ENCODE measurements at regions of chr5 and their contacts with region 1.

Region 1: GRCh38 chr5:989961-990530 is 18.6 kb upstream of the NKD2 start:
- DNase-seq: peak in 1 of 2 experiments; percentile 58
- H3K4me3 ChIP-seq: no peak overlapping the region
- H3K4me3 Mint-ChIP-seq: no peak overlapping the region
- H3K27ac Mint-ChIP-seq: no peak overlapping the region
- H3K4me1 ChIP-seq: peaks cover 7% of the 10 kb centered on the region; the same call in 1 of the 2 replicates
- H3K4me1 Mint-ChIP-seq: peaks cover 8% of the 10 kb centered on the region
- H3K27me3 ChIP-seq: no peaks in the 10 kb centered on the region
- H3K27me3 Mint-ChIP-seq: no peaks in the 10 kb centered on the region
- CTCF ChIP-seq: peak; percentile 10 to 73

Region 2: DNA sequence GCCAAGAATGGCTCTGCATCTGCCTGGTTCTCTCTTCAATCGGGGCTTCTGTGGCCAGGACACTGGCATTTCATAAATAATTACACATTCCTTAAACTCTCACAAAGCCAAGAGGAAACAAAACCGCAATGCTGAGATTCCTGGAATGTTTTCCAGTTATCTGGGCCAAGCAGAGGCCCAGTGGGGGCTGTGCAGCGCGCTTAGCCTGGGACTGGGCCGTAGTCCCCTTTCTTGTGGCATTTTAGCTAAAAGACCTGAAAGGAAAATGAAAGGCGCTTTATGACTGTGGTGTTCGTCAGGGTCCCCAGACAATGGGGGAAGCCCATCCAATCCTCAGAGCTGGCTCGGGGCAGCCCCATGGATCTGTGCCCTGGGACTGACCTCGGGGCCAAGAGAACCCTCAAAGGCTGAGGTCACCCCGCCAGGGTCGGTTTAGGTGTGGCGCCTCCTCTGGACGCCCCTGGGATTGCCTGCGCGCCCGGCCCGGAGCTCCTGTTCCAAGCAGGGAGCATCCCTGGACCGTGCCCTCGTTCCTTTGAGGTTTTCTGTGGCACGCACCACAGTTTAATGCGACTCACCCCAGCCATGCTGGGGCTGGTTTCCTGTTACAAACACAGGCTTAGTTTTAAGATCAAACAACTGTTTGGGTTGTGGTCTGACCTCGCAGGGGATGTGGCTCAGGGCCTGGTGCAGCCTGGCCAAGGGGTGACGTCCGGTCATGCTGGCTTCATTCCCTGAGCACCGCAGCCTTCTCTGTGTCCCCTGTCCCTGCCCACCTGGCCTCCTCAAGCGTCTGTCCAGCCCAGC is 32.9 kb before region 1 on chr5:
- CTCF ChIA-PET with region 1: no interaction called
- POLR2A ChIA-PET with region 1: no interaction called
- intact Hi-C with region 1: loop called (anchors 5 kb)
- DNase-seq: peak; percentile 57 to 69
- H3K4me3 ChIP-seq: no peak overlapping the region
- H3K4me3 Mint-ChIP-seq: no peak overlapping the region
- H3K27ac Mint-ChIP-seq: peak overlapping the region; percentile 75
- H3K4me1 ChIP-seq: peaks cover 24% of the 10 kb centered on the region
- H3K4me1 Mint-ChIP-seq: peaks cover 16% of the 10 kb centered on the region
- H3K27me3 ChIP-seq: no peaks in the 10 kb centered on the region
- H3K27me3 Mint-ChIP-seq: no peaks in the 10 kb centered on the region
- CTCF ChIP-seq: peak; percentile 7 to 29